ENCODE measurements at regions of chr10 and their contacts with region 1.

Region 1: GRCh38 chr10:97475936-97476594 is 22.2 kb downstream of the MMS19 start:
- DNase-seq: no peak
- H3K4me3 ChIP-seq: no peak overlapping the region
- H3K27ac ChIP-seq: no peak overlapping the region
- H3K27me3 ChIP-seq: no peaks in the 10 kb centered on the region
- CTCF ChIP-seq: no peak

Region 2: GRCh38 chr10:97427525-97428179 is 48.4 kb before region 1 on chr10:
- CTCF ChIA-PET with region 1: no interaction called
- POLR2A ChIA-PET with region 1: no interaction called
- DNase-seq: no peak
- H3K4me3 ChIP-seq: peak overlapping the region; percentile 95
- H3K27ac ChIP-seq: peak overlapping the region; percentile 57
- H3K27me3 ChIP-seq: no peaks in the 10 kb centered on the region
- CTCF ChIP-seq: no peak

Region 3: DNA sequence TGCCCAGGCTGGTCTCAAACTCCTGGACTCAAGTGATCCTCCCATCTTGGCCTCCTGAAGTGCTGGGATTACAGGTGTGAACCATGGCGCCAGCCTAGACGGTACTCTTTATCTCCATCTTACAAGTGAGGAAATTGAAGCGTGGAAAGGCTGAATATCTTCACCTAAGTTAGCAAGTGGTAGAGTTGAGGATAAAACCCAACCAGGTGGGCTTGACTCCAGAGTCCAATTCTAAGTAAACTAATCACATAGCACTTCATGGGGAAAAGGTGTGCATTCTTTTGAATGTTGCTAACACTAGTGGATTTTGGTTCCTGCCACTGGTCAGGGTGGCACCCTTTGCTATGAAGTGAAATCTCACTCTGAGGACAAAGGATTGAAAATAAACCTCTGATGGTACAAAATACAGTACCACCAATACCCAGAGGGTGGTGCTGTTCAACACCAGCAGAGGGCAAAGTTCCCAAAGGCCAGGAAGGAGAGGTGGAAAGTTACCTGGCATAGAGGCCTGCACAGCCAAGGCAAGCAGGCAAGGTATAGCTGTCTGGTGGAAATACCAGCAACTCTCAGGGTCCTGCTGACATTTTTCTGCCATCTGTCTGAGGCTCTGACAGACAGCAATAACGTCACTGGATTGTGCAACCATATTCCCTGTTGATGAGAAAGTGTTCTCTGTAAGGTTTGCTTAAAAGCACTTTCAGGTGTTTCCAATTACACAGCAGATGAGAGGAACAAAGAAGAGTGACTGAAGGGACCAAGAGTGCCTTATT is 12.5 kb before region 1 on chr10:
- CTCF ChIA-PET with region 1: interaction called, 17 read pairs
- POLR2A ChIA-PET with region 1: no interaction called
- DNase-seq: no peak
- H3K4me3 ChIP-seq: no peak overlapping the region
- H3K27ac ChIP-seq: peak overlapping the region; percentile 61
- H3K27me3 ChIP-seq: no peaks in the 10 kb centered on the region
- CTCF ChIP-seq: peak; percentile 88

Measured in AG04450 (cell line).